Aorta (tissue), 5 donors: ENCODE measurements at regions of chr7 and their contacts with region 1.

Region 1: GRCh38 chr7:120792091-120792860 is 65.7 kb downstream of the TSPAN12 start:
- DNase-seq: peak; percentile 80 to 94
- ATAC-seq: peak; percentile 83
- H3K4me3 ChIP-seq: no peak overlapping the region
- H3K27ac ChIP-seq: no peak overlapping the region
- H3K4me1 ChIP-seq: no peaks in the 10 kb centered on the region
- H3K27me3 ChIP-seq: no peaks in the 10 kb centered on the region

Region 2: GRCh38 chr7:120941064-120941463 is 148.8 kb after region 1 on chr7:
- intact Hi-C with region 1: loop called in 1 of 2 experiments (anchors 5 kb)
- DNase-seq: no peak
- ATAC-seq: no peak
- H3K4me3 ChIP-seq: no peak overlapping the region
- H3K27ac ChIP-seq: no peak overlapping the region
- H3K4me1 ChIP-seq: no peaks in the 10 kb centered on the region
- H3K27me3 ChIP-seq: no peaks in the 10 kb centered on the region

Region 3: DNA sequence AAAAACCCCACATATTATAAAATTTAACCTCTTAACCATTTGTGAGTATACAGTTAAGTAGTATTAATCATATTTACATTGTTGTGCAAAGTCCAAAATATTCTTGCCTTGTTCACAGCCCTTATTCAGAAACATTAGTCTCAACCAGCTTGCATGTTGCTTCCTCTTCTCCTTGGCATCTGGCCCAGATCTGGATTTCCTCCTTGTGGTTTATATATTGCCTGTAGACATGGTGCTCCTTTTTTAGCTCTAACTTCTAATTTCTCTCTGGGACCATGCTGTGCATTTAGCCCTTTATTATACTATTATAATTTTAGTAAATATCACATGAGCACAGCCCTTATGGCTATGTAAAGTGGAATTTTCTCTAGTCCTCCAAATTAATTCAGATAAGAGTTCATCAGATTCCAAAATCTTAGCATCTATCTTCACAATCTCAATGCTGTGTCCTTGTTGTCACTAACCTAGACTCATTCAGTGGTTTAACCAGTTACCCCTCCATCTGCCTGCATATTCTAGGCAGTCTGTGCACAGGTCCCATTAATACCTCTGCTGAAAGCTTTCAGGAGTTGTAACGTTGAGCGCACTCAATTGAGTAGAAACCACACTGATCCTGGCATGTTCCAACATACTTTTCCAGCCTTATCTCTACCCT is 204.2 kb after region 1 on chr7:
- intact Hi-C with region 1: no loop called
- DNase-seq: peak in 1 of 2 donors; percentile 84
- ATAC-seq: no peak
- H3K4me3 ChIP-seq: no peak overlapping the region
- H3K27ac ChIP-seq: peak overlapping the region; percentile 22 to 78
- H3K4me1 ChIP-seq: peaks cover 7 to 16% of the 10 kb centered on the region in 2 donors
- H3K27me3 ChIP-seq: no peaks in the 10 kb centered on the region

Region 4: GRCh38 chr7:121113288-121113687 is 321.0 kb after region 1 on chr7:
- intact Hi-C with region 1: loop called in 1 of 2 experiments (anchors 10 kb)
- DNase-seq: no peak
- ATAC-seq: no peak
- H3K4me3 ChIP-seq: no peak overlapping the region
- H3K27ac ChIP-seq: no peak overlapping the region
- H3K4me1 ChIP-seq: peaks cover 2 to 3% of the 10 kb centered on the region in 2 donors
- H3K27me3 ChIP-seq: no peaks in the 10 kb centered on the region